Activated B cell treated with CpG ODN at 0.5 μM for 24 hours (primary cell): ENCODE measurements at regions of chr22 and their contacts with region 1.

Region 1: DNA sequence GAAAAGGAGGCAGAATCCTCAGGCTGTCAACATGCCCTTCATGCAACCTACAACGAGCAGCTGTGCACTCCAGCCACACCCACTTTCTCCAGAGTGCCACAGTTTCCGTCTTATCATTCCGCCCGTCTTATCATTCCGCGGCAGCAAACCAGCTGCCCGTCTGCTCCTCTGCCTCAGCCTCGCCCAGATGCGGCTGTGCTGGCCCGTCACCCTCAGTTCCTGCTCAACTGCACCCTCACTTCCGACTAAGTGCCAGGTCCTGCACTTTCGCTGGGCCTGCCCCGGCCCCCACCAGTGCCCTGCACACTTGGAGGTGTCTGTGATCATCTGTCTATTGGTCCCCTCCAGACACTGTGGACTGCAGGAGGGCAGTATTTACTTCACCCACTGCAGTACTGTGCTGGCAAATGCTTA is 43.7 kb downstream of the MICAL3 start:
- DNase-seq: no peak
- ATAC-seq: peak; percentile 72
- H3K4me3 Mint-ChIP-seq: peak overlapping the region; percentile 68
- H3K27ac Mint-ChIP-seq: peak overlapping the region; percentile 76
- H3K4me1 Mint-ChIP-seq: peaks cover 84% of the 10 kb centered on the region
- H3K27me3 Mint-ChIP-seq: no peaks in the 10 kb centered on the region
- CTCF ChIP-seq: no peak

Region 2: GRCh38 chr22:17938484-17938924 is 42.1 kb before region 1 on chr22:
- CTCF ChIA-PET with region 1: no interaction called
- POLR2A ChIA-PET with region 1: no interaction called
- intact Hi-C with region 1: loop called (anchors 5 kb)
- DNase-seq: no peak
- ATAC-seq: no peak
- H3K4me3 Mint-ChIP-seq: no peak overlapping the region
- H3K27ac Mint-ChIP-seq: peak overlapping the region; percentile 18
- H3K4me1 Mint-ChIP-seq: peaks cover 97% of the 10 kb centered on the region
- H3K27me3 Mint-ChIP-seq: no peaks in the 10 kb centered on the region
- CTCF ChIP-seq: no peak

Region 3: GRCh38 chr22:17994424-17995108 is 13.9 kb after region 1 on chr22:
- CTCF ChIA-PET with region 1: no interaction called
- POLR2A ChIA-PET with region 1: interaction called, 6 read pairs
- intact Hi-C with region 1: loop called (anchors 2 kb)
- DNase-seq: no peak
- ATAC-seq: peak; percentile 10
- H3K4me3 Mint-ChIP-seq: peak overlapping the region; percentile 63
- H3K27ac Mint-ChIP-seq: peak overlapping the region; percentile 94
- H3K4me1 Mint-ChIP-seq: peaks cover 98% of the 10 kb centered on the region
- H3K27me3 Mint-ChIP-seq: no peaks in the 10 kb centered on the region
- CTCF ChIP-seq: no peak